ENCODE measurements at regions of chr3 and their contacts with region 1.

Region 1: DNA sequence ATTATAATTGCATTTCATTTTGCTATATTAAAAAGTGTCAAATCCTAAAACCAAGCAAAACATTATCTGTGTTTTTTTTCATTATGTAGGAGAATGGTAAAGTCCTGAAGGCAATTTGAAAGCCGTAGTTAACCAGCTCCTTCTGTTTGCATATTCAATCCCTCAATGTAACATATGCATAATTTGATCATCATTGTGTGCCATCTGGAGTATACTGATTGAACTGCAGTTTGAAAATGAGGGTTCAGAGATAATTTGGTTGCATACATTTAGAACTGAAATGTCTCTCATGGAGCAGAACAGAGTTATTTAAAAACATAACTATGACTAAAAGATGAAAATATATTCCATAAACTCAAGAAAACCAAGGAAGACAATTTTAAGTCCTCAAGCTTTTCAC is 518.6 kb downstream of the GBE1 start:
- DNase-seq: no peak
- H3K4me3 ChIP-seq: no peak overlapping the region
- CTCF ChIP-seq: peak; percentile 46

Region 2: DNA sequence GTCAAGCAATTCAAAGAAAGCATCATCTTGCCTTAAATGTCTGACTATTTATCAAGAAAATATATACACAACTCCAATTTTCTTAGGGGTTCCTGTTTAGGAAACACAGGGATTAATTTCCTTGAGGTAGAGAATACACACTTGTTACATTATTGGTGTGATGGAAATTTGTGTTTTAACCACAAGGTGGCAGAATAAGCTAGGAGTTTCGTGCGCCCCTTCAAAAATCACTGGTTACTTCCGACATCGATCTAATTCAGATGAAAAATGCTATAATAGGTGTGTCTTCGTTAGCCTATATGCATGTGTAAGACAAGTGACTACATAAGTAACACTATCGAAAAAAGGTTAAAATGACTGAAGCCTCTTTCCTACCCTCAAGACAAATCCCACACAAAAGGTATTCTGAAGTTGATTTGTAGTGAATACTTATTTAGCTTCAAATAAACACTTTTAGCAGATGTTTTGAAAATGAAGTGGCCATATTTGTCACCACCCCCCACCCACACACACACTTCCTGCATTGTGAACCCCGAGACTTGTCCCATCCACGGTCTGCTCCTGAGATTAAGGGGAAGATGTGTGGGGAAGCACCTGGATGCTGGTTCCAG is 1721.5 kb before region 1 on chr3:
- CTCF ChIA-PET with region 1: interaction called, 18 read pairs
- POLR2A ChIA-PET with region 1: no interaction called
- DNase-seq: no peak
- H3K4me3 ChIP-seq: no peak overlapping the region
- CTCF ChIP-seq: peak; percentile 41

Region 3: GRCh38 chr3:80914854-80915253 is 328.0 kb before region 1 on chr3:
- CTCF ChIA-PET with region 1: no interaction called
- POLR2A ChIA-PET with region 1: no interaction called
- DNase-seq: no peak
- H3K4me3 ChIP-seq: no peak overlapping the region
- CTCF ChIP-seq: no peak

Region 4: GRCh38 chr3:81406318-81406717 is 163.4 kb after region 1 on chr3:
- CTCF ChIA-PET with region 1: no interaction called
- POLR2A ChIA-PET with region 1: no interaction called
- DNase-seq: no peak
- H3K4me3 ChIP-seq: no peak overlapping the region
- CTCF ChIP-seq: no peak

Region 5: DNA sequence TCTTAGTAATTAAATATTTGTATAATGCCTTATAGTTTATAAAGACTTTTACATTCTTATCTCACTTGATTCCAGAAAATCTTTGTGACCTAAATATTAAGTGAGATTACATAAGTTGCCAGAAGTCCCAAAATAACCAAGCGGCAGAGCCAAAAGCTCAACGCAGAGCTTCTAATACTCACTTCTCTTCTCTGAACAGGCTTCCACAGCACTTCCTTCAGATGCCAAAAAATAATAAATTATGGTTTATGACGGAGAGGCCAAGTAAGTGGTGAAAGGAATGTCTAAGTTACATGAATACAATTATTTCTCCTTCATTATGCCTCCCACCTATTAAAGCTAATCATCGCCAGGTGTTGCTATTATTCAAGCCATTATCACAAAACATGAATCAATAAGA is 408.3 kb after region 1 on chr3:
- CTCF ChIA-PET with region 1: no interaction called
- POLR2A ChIA-PET with region 1: no interaction called
- DNase-seq: no peak
- H3K4me3 ChIP-seq: no peak overlapping the region
- CTCF ChIP-seq: no peak

Measured in AG04449 (cell line).